SK-N-SH (cell line): ENCODE measurements at regions of chr22 and their contacts with region 1.

Region 1: DNA sequence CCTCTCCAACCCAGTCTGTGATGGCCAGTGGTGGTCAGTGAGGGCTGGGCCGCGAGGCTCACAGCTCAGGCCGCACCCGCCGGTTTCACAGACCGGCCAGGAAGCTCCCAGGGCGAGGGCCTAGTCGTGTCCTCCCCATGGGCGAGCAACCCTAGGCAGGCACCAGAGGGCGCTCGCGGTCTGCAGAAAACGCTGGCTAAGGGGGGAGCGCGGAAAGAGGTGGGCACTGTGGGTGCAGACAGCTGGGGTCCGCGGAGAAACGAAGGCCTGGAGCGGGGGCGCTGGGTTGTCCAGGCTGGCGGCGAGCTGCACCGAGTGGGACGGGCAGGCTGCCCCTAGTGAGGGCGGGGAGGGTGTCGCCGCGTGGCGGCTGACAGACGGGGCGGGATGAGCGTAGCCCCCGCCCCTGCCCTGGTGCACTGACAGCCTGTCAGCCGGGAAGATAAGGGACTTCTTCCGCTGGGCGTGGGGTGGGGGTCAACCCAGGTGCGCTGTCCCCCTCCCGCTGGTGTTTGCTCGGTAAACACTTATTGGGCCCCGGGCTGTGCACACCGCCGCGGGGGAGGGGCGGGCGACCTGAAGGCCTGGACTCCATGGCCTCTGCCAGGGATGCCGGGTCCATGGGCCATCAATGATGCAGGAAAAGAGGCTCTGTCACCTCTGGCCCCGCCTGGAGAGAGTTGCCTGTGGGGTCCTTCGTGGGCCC is 7.5 kb downstream of the GP1BB start:
- DNase-seq: peak; percentile 96
- H3K4me3 ChIP-seq: peak overlapping the region; percentile 47 to 65; a peak in 3 of 4 replicates
- H3K27ac ChIP-seq: no peak overlapping the region
- H3K4me1 ChIP-seq: peaks cover 0 to 26% of the 10 kb centered on the region in 2 experiments; a peak in 1 of 4 replicates
- H3K27me3 ChIP-seq: no peaks in the 10 kb centered on the region
- CTCF ChIP-seq: peak; percentile 91
- EP300 ChIP-seq: no peak
- RAD21 ChIP-seq: peak; percentile 97

Region 2: GRCh38 chr22:19603767-19604166 is 127.0 kb before region 1 on chr22:
- CTCF ChIA-PET with region 1: no interaction called
- POLR2A ChIA-PET with region 1: no interaction called
- DNase-seq: no peak
- H3K4me3 ChIP-seq: no peak overlapping the region
- H3K27ac ChIP-seq: no peak overlapping the region
- H3K4me1 ChIP-seq: no peaks in the 10 kb centered on the region
- H3K27me3 ChIP-seq: peaks cover 8% of the 10 kb centered on the region
- CTCF ChIP-seq: no peak
- EP300 ChIP-seq: no peak
- RAD21 ChIP-seq: no peak

Region 3: DNA sequence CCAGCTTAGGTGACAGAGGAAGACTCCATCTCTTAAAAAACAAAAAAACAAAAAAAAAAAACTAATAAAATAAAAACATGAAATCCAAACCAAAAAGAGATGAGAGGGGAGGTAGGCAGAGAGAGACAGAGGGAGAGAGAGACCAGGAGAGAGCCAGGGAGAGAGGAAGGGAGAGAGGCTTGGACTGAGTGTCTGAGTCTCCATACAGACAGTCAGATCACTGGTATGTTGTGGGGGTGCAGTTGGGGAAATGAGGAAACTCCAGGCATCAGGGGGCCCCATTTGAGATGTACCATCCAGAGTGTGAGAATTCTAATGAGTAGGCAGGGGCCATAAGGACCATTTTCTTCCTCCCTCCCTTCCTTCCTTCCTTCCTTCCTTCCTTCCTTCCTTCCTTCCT is 69.7 kb before region 1 on chr22:
- CTCF ChIA-PET with region 1: no interaction called
- POLR2A ChIA-PET with region 1: no interaction called
- DNase-seq: no peak
- H3K4me3 ChIP-seq: no peak overlapping the region
- H3K27ac ChIP-seq: no peak overlapping the region
- H3K4me1 ChIP-seq: peaks cover 12 to 22% of the 10 kb centered on the region in 2 experiments; a peak in 3 of 4 replicates
- H3K27me3 ChIP-seq: no peaks in the 10 kb centered on the region
- CTCF ChIP-seq: no peak
- EP300 ChIP-seq: no peak
- RAD21 ChIP-seq: no peak

Region 4: DNA sequence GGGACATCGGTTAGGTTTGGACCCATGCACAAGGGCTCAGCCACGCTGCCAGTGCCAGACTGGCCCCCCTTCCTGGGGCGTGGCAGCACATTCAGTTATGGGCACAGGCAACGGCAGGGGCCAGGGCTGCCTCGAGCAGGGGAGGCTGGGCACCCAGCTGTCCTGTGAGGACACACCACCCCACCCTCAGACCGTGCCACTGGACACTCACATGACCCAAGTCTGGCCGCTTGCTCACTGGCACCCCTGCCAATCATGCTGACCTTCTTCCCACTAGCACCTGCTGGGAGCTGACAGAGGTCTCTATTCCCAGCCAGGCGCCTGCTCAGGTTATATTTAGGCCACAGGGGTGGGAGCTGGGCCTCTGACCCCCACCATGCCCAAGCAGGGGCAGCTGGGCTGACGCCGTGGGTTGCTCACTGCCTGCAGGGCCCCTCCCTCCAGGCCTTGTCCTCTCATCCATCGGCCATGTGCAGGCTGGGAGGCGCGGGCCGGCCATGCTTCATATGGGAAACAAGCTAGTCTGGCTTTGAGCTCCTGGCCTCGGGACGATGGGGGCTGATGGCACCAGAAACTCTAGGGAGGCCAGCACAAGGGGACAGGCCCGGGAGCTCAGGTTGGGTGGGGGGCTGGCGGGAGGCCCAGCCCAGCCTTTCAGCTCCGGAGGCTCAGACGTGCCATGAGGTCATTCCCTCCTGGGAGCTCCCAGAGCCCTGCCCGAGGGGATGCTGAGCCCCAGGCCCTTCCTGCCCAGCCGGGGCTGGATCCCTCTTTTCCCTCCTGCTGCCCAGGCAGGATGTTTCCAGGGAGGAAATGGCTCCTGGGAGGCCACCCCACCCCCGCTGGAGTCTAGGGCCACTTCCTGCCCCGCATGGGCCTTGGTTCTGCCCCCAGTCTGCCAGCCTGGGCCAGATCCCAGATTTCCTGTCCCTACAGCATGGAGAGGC is 14.6 kb after region 1 on chr22:
- CTCF ChIA-PET with region 1: interaction called, 54 read pairs
- POLR2A ChIA-PET with region 1: no interaction called
- DNase-seq: no peak
- H3K4me3 ChIP-seq: no peak overlapping the region
- H3K27ac ChIP-seq: no peak overlapping the region
- H3K4me1 ChIP-seq: peaks cover 0 to 15% of the 10 kb centered on the region in 2 experiments; a peak in 1 of 4 replicates
- H3K27me3 ChIP-seq: no peaks in the 10 kb centered on the region
- CTCF ChIP-seq: no peak
- EP300 ChIP-seq: no peak
- RAD21 ChIP-seq: no peak

Region 5: GRCh38 chr22:19772422-19773324 is 41.9 kb after region 1 on chr22:
- CTCF ChIA-PET with region 1: interaction called, 21 read pairs
- POLR2A ChIA-PET with region 1: no interaction called
- DNase-seq: no peak
- H3K4me3 ChIP-seq: no peak overlapping the region
- H3K27ac ChIP-seq: no peak overlapping the region
- H3K4me1 ChIP-seq: no peaks in the 10 kb centered on the region; a peak in 1 of 4 replicates
- H3K27me3 ChIP-seq: peaks cover 14% of the 10 kb centered on the region
- CTCF ChIP-seq: no peak
- EP300 ChIP-seq: no peak
- RAD21 ChIP-seq: no peak

Region 6: GRCh38 chr22:19854778-19855503 is 124.1 kb after region 1 on chr22 and contains the starts of genes GNB1L and RTL10:
- CTCF ChIA-PET with region 1: interaction called, 22 read pairs
- POLR2A ChIA-PET with region 1: no interaction called
- DNase-seq: peak; percentile 98
- H3K4me3 ChIP-seq: peak within 1 kb of the TSS; percentile 92 to 96
- H3K27ac ChIP-seq: peak within 1 kb of the TSS; percentile 84 to 91
- H3K4me1 ChIP-seq: peaks cover 9 to 24% of the 10 kb centered on the region in 2 experiments; a peak in 3 of 4 replicates
- H3K27me3 ChIP-seq: no peaks in the 10 kb centered on the region
- CTCF ChIP-seq: no peak
- EP300 ChIP-seq: no peak
- RAD21 ChIP-seq: peak; percentile 25; the same call in 1 of the 2 replicates
- polyA plus RNA-seq, gene GNB1L: 3.2 and 5.9 TPM in 2 replicates
- polyA plus RNA-seq, gene RTL10: 7.8 and 8.0 TPM in 2 replicates

Region 7: GRCh38 chr22:19891317-19892256 is 160.8 kb after region 1 on chr22:
- CTCF ChIA-PET with region 1: interaction called, 45 read pairs
- POLR2A ChIA-PET with region 1: no interaction called
- DNase-seq: peak; percentile 89
- H3K4me3 ChIP-seq: no peak overlapping the region
- H3K27ac ChIP-seq: peak overlapping the region; percentile 72 to 98
- H3K4me1 ChIP-seq: peaks cover 42 to 43% of the 10 kb centered on the region in 2 experiments
- H3K27me3 ChIP-seq: no peaks in the 10 kb centered on the region
- CTCF ChIP-seq: no peak
- EP300 ChIP-seq: peak; percentile 74 to 90; a peak in 3 of 4 replicates
- RAD21 ChIP-seq: no peak

Region 8: GRCh38 chr22:19918332-19919106 is 187.7 kb after region 1 on chr22:
- CTCF ChIA-PET with region 1: interaction called, 297 read pairs
- POLR2A ChIA-PET with region 1: no interaction called
- DNase-seq: no peak
- H3K4me3 ChIP-seq: no peak overlapping the region
- H3K27ac ChIP-seq: no peak overlapping the region
- H3K4me1 ChIP-seq: no peaks in the 10 kb centered on the region
- H3K27me3 ChIP-seq: no peaks in the 10 kb centered on the region
- CTCF ChIP-seq: no peak
- EP300 ChIP-seq: no peak
- RAD21 ChIP-seq: no peak

Region 9: DNA sequence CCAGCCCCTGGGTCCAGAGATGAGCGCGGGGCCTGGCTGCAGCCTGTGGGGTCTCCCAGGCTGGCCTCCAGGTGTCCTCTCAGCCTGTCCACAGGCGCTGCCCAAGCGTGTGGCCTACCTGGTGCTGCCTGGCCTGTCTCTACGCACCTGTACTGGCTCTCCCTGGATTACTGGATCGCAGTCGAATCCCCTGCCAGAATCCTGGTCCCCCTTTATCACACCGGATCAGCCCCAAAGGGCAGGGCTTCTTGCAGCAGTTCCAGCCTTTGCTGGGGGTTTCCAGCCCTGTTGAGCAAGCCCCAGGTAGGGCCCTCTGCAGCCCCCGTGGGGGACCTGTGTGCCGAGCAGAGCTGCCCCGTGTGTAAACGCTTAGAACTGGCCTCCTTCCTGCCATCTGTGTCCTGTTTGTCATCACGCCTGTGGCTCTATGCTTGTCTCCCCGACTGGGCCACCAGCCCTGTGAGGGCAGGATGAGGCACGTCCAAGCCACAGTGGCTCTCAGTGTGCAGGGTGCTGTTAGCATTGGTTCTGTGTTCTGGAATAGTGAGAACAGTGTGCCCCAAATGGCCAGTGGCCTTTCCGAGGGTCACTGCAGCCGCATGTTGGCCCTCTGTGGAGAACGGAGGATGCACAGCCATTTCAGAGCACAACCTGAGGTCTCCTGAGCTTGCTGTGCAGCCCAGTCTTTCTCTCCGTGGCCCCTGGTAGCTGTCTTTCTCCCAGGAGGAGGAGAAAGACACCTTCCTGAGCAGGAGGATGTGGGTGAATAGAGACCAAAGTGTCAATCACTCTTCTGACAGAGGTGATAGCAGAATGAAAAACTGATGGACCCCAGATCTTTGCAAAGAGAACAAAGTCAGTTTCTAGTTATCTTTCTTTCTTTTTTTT is 224.7 kb after region 1 on chr22:
- CTCF ChIA-PET with region 1: interaction called, 17 read pairs
- POLR2A ChIA-PET with region 1: no interaction called
- DNase-seq: peak; percentile 15
- H3K4me3 ChIP-seq: no peak overlapping the region
- H3K27ac ChIP-seq: no peak overlapping the region
- H3K4me1 ChIP-seq: no peaks in the 10 kb centered on the region; a peak in 1 of 4 replicates
- H3K27me3 ChIP-seq: no peaks in the 10 kb centered on the region
- CTCF ChIP-seq: no peak
- EP300 ChIP-seq: no peak
- RAD21 ChIP-seq: no peak

Region 10: GRCh38 chr22:19984201-19984753 is 253.5 kb after region 1 on chr22:
- CTCF ChIA-PET with region 1: no interaction called
- POLR2A ChIA-PET with region 1: no interaction called
- DNase-seq: no peak
- H3K4me3 ChIP-seq: no peak overlapping the region
- H3K27ac ChIP-seq: peak overlapping the region; percentile 34 to 40; a peak in 2 of 4 replicates
- H3K4me1 ChIP-seq: peaks cover 17 to 47% of the 10 kb centered on the region in 2 experiments; a peak in 3 of 4 replicates
- H3K27me3 ChIP-seq: no peaks in the 10 kb centered on the region
- CTCF ChIP-seq: no peak
- EP300 ChIP-seq: no peak
- RAD21 ChIP-seq: no peak